Common myeloid progenitor, CD34-positive (primary cell): ENCODE measurements at regions of chr16 and their contacts with region 1.

Region 1: DNA sequence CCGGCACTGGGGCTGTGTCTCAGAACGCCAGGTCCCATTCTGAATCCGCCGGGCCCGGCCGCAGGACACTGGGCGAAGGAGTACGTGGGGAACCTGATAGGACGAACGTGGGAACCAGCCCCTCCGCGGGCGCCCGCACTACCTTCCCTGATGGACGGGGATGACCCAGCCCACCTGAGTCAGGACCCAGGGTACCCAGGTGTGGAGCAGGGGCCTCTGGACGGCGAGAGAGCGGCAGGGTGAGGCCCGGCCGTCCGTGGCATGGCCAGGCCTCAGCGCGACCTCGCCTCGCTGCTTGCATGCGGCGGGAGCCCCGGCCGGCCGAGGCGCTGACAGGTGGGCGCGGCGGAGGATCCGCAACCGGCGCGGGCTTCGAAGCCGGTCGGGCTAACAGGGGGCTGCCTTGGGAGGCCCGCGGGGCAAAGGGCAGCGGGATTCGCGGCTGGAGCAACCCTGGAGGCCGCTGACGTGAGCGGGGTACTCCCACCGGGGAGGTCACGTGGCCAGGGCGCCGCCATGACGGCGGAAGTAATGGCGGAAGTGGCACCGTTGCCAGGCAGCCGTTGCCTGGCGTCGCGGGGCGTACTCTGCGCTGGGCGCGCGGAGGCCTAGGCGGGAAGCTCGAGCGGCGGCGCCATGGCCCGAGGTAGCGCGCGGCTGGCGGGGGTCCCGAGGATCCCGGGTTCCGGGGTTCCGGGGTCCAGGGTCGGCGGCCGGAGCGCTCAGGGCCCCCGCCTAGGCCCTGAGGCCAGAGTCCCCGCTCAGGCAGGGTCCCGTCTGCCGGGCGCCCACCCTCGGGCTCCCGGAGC is at the start of gene WDR90:
- DNase-seq: peak; percentile 89 to 94 (median 94)
- H3K4me3 ChIP-seq: peak within 1 kb of the TSS; percentile 35 to 81 (median 73)
- H3K27ac ChIP-seq: peak within 1 kb of the TSS; percentile 79 to 88
- H3K4me1 ChIP-seq: peaks cover 0 to 31% (median 30%) of the 10 kb centered on the region in 4 experiments
- H3K27me3 ChIP-seq: no peaks in the 10 kb centered on the region

Region 2: DNA sequence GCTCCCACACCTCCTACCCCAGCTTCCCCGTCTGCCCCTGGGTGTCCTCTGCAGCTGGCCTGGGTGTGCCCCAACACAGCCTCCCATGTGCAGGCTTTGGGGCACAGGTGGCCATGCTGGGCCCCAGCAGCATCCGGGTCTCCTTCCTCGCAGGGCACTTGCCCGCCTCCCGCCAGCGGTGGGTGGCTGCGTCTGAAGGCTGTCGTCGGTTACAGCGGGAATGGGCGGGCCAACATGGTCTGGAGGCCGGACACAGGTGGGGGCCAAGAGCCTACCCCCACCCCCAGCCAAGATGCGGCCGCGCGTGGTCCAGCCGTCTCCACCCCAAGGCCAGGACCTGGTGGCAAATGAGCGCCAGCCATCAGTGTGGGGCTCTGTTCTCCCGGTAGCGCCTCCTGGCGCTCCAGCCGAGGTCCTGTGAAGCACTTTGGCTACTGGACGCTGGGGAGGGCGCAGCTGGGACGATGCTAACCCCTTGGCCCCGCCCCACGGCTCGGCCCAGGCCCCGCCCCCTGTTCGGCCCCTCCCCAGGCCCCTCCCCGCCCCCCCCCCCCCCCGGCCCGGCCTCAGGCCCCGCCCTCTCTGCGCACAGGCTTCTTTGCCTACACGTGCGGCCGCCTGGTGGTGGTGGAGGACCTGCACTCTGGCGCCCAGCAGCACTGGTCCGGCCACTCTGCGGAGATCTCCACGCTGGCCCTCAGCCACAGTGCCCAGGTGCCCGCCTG is 11.6 kb after region 1 on chr16:
- CTCF ChIA-PET with region 1: interaction called, 16 read pairs
- POLR2A ChIA-PET with region 1: interaction called, 3 read pairs
- DNase-seq: peak; percentile 83 to 93 (median 90)
- H3K4me3 ChIP-seq: peak overlapping the region in 4 of 7 experiments; percentile 15 to 74 (median 56)
- H3K27ac ChIP-seq: peak overlapping the region in 1 of 2 experiments; percentile 1
- H3K4me1 ChIP-seq: peaks cover 0 to 19% (median 16%) of the 10 kb centered on the region in 4 experiments
- H3K27me3 ChIP-seq: no peaks in the 10 kb centered on the region

Region 3: GRCh38 chr16:745739-746138 is 96.8 kb after region 1 on chr16:
- CTCF ChIA-PET with region 1: no interaction called
- POLR2A ChIA-PET with region 1: no interaction called
- DNase-seq: peak; percentile 36 to 46 (median 44)
- H3K4me3 ChIP-seq: no peak overlapping the region
- H3K27ac ChIP-seq: no peak overlapping the region
- H3K4me1 ChIP-seq: peaks cover 0 to 6% (median 3%) of the 10 kb centered on the region in 4 experiments
- H3K27me3 ChIP-seq: no peaks in the 10 kb centered on the region